ENCODE measurements at regions of chr13 and their contacts with region 1.

Region 1: GRCh38 chr13:36999054-36999714 is at the start of gene ALG5:
- DNase-seq: peak; percentile 90 to 95 (median 92)
- ATAC-seq: peak; percentile 73 to 89 (median 88)
- H3K4me3 ChIP-seq: peak within 1 kb of the TSS; percentile 75 to 99 (median 88)
- H3K27ac ChIP-seq: peak within 1 kb of the TSS; percentile 86 to 100 (median 98)
- H3K4me1 ChIP-seq: peaks cover 0 to 24% (median 18%) of the 10 kb centered on the region in 12 donors
- H3K27me3 ChIP-seq: no peaks in the 10 kb centered on the region
- CTCF ChIP-seq: peak; percentile 88 to 100 (median 99)
- POLR2A ChIP-seq: peak in 1 of 2 donors; percentile 72
- total RNA-seq, gene ALG5: 8.4 to 15.2 (median 11.6) TPM

Region 2: DNA sequence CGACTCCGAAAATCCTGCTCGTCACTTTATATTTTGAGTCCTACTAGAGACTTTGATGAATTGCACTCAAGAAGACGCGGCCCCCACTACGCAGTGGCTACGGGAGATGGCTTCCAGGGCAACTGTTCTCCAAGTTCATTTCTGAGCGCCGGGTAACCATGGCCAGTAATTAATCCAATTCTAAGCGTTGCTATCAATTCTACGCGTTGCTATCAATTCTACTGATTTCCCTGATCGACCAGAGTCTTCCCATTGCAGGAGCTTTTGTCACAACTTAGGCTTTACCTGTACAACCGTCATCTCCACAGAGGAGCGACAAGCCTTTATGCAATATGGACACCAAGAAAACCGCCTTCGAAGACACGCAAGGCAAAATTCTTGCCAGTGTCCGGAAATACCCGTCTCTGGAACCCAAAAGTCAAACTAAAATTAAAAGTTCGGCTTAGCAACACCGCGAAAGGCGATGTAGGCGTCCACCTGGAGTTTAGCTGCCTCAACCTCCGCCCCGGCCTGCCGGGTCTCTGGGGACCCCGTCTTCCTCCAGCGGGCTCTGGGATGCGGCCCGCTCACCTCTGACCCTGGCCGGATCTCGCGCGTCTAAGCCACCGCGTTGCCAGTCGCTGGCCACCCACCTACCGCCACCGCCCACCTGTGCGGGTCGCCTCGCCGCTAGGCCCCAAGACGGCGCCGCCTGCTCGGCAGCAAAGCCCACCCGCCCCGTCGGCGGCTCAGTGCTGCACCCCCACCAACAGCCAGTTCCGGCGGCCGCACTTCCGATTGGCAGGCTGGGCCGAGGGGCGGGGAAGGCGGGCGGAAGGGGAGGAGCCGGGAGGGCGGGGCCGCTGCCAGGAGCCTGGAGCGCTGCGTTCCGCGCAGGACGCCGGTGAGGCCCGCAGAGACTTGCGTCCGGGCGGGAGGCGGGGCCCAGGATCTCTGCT is 60.0 kb after region 1 on chr13 and contains the start of gene SUPT20H:
- intact Hi-C with region 1: loop called in 1 of 10 experiments (anchors 5 kb)
- DNase-seq: peak; percentile 94 to 97 (median 95)
- ATAC-seq: peak; percentile 95 to 100 (median 99)
- H3K4me3 ChIP-seq: peak within 1 kb of the TSS; percentile 66 to 97 (median 86)
- H3K27ac ChIP-seq: peak within 1 kb of the TSS; percentile 75 to 96 (median 92)
- H3K4me1 ChIP-seq: peaks cover 0 to 24% (median 14%) of the 10 kb centered on the region in 12 donors
- H3K27me3 ChIP-seq: no peaks in the 10 kb centered on the region
- CTCF ChIP-seq: peak in 1 of 12 donors; percentile 9
- POLR2A ChIP-seq: peak in 1 of 2 donors; percentile 86
- total RNA-seq, gene SUPT20H: 19.0 to 32.8 (median 26.5) TPM

Region 3: GRCh38 chr13:37070956-37071355 is 71.8 kb after region 1 on chr13:
- intact Hi-C with region 1: no loop called
- DNase-seq: no peak
- ATAC-seq: no peak
- H3K4me3 ChIP-seq: no peak overlapping the region
- H3K27ac ChIP-seq: no peak overlapping the region
- H3K4me1 ChIP-seq: no peaks in the 10 kb centered on the region
- H3K27me3 ChIP-seq: no peaks in the 10 kb centered on the region
- CTCF ChIP-seq: no peak
- POLR2A ChIP-seq: no peak